Activated CD8-positive, alpha-beta T cell treated with anti-CD3 and anti-CD28 coated beads for 36 hours (primary cell): ENCODE measurements at regions of chr14 and their contacts with region 1.

Region 1: GRCh38 chr14:77376771-77377501 is at the starts of genes SAMD15 and TMED8:
- DNase-seq: peak; percentile 88
- ATAC-seq: peak; percentile 96
- H3K4me3 Mint-ChIP-seq: peak within 1 kb of the TSS; percentile 91
- H3K27ac Mint-ChIP-seq: peak within 1 kb of the TSS; percentile 91
- H3K4me1 Mint-ChIP-seq: peaks cover 38% of the 10 kb centered on the region
- H3K27me3 Mint-ChIP-seq: no peaks in the 10 kb centered on the region
- CTCF ChIP-seq: no peak
- total RNA-seq, gene SAMD15: 0.11 to 0.56 TPM
- total RNA-seq, gene TMED8: 25.0 to 25.4 TPM

Region 2: DNA sequence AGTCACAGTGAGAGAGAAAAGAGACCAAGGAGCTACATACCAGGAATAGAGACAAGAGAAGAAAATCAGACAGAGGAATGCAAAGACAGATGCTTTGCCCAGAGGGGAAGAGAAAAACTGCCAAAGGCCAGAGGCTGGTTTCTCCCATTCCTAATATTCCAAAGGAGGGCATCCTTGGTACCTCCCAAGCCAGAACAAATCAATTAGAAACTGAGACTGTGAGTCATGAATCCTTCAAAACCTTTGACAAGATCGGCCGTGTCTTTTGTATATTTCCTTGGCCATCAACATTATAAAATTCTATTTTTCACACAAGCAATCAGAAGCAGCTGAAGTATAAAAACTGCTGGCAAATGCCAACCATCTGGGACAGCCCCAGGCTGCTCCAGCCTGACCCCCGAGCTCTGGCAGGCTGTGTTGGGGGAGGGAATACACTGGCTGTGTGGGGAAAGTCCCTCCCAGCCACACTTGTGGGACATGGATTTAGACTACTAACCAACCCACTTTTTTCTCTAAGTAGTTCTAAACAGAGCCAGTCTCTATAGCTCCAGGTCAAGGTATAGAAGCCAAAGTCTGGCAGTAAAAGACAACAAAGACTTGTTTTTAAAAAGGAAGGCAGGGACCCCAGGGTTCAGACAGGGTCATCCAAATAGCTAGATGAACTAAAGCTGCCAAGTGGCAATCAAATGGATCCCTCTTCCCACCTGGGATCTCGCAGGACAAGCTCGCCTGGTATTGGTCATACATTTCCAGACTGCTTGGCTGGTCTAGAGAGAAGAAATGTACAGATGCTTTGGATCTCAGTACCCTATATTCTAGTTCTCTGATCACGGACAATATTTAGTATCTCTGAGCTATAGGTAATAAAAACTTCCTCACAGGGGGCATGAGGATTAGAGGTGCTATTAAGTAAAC is 69.8 kb before region 1 on chr14:
- CTCF ChIA-PET with region 1: no interaction called
- POLR2A ChIA-PET with region 1: no interaction called
- intact Hi-C with region 1: no loop called
- DNase-seq: peak; percentile 19
- ATAC-seq: no peak
- H3K4me3 Mint-ChIP-seq: no peak overlapping the region
- H3K27ac Mint-ChIP-seq: no peak overlapping the region
- H3K4me1 Mint-ChIP-seq: peaks cover 17% of the 10 kb centered on the region
- H3K27me3 Mint-ChIP-seq: no peaks in the 10 kb centered on the region
- CTCF ChIP-seq: no peak

Region 3: DNA sequence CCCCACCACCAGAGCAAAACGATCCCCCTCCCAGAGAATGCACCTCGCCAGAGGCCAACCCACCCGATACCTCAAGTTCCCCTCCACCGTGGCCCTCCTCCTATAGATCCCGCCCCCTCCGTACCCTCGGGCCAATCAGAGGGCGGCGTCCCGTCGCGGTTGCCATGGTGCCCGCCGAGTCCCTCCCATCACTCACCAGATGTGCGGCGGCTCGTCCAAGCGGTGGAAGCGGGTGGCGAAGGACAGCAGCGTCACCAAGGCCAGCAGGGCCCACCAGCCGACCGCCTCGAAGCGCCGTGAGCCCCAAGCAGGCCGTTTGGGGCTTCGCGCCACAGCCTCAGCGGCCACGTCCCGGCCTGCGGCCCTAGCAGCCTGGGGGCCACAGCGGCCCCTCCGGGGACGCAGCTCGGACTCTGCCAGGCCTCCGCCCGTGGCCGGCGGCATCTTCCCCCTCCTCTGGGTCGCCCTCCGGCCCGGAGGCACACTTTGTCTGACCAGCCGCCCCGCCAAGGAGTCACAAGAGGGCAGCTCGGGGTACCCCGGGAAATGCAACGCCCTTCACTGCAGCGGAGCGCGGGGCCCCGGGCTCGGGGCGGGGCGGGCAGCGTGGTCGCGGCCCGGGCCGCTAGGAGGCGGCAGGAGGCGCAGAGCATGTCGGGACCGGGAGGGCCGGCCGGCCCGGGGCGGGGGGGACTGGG is 56.5 kb before region 1 on chr14 and contains the start of gene POMT2:
- CTCF ChIA-PET with region 1: interaction called, 9 read pairs
- POLR2A ChIA-PET with region 1: interaction called, 10 read pairs
- intact Hi-C with region 1: loop called (anchors 1 kb)
- DNase-seq: peak; percentile 94
- ATAC-seq: peak; percentile 52
- H3K4me3 Mint-ChIP-seq: peak within 1 kb of the TSS; percentile 92
- H3K27ac Mint-ChIP-seq: peak within 1 kb of the TSS; percentile 100
- H3K4me1 Mint-ChIP-seq: peaks cover 18% of the 10 kb centered on the region
- H3K27me3 Mint-ChIP-seq: no peaks in the 10 kb centered on the region
- CTCF ChIP-seq: peak; percentile 60
- total RNA-seq, gene POMT2: 14.2 to 15.3 TPM

Region 4: DNA sequence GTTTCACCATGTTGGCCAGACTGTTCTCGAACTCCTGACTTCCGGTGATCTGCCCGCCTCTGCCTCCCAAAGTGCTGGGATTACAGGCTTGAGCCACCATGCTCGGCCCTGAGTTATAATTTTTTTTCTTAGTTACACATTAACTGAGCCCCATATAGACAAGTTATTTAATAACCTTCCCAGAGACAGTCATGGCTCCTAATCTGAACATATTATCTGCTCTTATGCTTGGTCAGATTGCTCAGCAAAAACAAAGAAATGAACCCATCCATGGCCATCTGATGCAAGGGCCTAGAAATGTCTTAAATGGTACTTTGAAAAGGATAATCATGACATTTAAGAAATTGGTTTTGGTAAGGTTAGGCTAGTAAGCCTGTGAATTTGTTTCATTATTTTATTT is 13.3 kb after region 1 on chr14:
- CTCF ChIA-PET with region 1: no interaction called
- POLR2A ChIA-PET with region 1: no interaction called
- intact Hi-C with region 1: no loop called
- DNase-seq: no peak
- ATAC-seq: no peak
- H3K4me3 Mint-ChIP-seq: no peak overlapping the region
- H3K27ac Mint-ChIP-seq: no peak overlapping the region
- H3K4me1 Mint-ChIP-seq: no peaks in the 10 kb centered on the region
- H3K27me3 Mint-ChIP-seq: no peaks in the 10 kb centered on the region
- CTCF ChIP-seq: no peak